Psoas muscle (tissue), 8 donors: ENCODE measurements at regions of chr6 and their contacts with region 1.

Region 1: GRCh38 chr6:2765166-2765895 is at the start of gene WRNIP1:
- DNase-seq: peak; percentile 100
- ATAC-seq: peak; percentile 89 to 92 (median 90)
- H3K4me3 ChIP-seq: peak within 1 kb of the TSS; percentile 86
- H3K27ac ChIP-seq: peak within 1 kb of the TSS; percentile 93
- H3K4me1 ChIP-seq: peaks cover 32% of the 10 kb centered on the region
- H3K27me3 ChIP-seq: no peaks in the 10 kb centered on the region
- CTCF ChIP-seq: peak; percentile 71
- total RNA-seq, gene WRNIP1: 26.5 to 53.3 (median 41.3) TPM

Region 2: GRCh38 chr6:2734488-2735166 is 30.7 kb before region 1 on chr6:
- intact Hi-C with region 1: loop called in 1 of 2 experiments (anchors 2 kb)
- DNase-seq: no peak
- ATAC-seq: peak; percentile 37 to 69 (median 48)
- H3K4me3 ChIP-seq: no peak overlapping the region
- H3K27ac ChIP-seq: peak overlapping the region; percentile 81
- H3K4me1 ChIP-seq: peaks cover 36% of the 10 kb centered on the region
- H3K27me3 ChIP-seq: no peaks in the 10 kb centered on the region
- CTCF ChIP-seq: no peak